GM13977 (cell line): ENCODE measurements at regions of chr12 and their contacts with region 1.

Region 1: GRCh38 chr12:59149997-59150642 is 229.8 kb upstream of the LRIG3 start:
- DNase-seq: peak; percentile 31
- CTCF ChIP-seq: peak; percentile 98

Region 2: DNA sequence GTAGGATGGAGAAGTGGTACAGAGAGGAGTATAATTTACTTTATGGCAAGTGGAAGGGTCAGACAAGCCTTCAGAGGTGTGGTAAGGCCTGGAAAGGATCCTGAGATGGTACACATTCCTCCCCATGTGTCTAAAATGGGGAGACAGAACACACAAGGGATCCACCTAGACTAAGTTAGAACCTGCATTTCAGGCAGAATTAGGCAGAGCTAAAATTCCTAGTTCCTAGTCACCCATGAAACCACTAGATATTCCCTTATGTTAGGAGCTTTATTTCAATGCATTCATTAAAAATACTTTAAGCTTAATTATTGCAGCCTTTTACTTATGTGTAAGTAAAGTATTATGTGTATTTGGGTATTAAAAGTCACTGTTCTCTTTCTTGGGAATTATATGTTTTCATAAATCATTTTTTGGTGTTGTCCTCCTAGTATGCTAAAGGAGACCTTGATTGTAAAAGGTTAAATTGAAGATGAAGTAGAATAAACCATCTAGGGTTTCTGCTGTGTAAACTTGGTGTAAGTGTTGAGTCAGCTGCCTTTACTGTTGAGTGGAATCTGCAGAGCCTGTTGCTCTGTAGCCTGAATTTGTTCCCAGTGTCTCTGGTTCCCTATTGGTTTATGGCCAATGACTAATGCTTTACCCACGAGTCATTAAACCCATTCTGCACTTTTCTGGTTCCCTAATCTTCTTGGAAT is 785.6 kb before region 1 on chr12:
- in situ Hi-C with region 1: loop called (anchors 25 kb)
- DNase-seq: no peak
- CTCF ChIP-seq: no peak

Region 3: GRCh38 chr12:58540480-58541299 is 609.4 kb before region 1 on chr12:
- in situ Hi-C with region 1: loop called (anchors 25 kb)
- DNase-seq: no peak
- CTCF ChIP-seq: peak; percentile 66

Region 4: GRCh38 chr12:58950739-58951100 is 199.4 kb before region 1 on chr12:
- in situ Hi-C with region 1: no loop called
- DNase-seq: no peak
- CTCF ChIP-seq: no peak

Region 5: GRCh38 chr12:59067083-59067482 is 83.0 kb before region 1 on chr12:
- in situ Hi-C with region 1: no loop called
- DNase-seq: peak; percentile 23
- CTCF ChIP-seq: no peak

Region 6: DNA sequence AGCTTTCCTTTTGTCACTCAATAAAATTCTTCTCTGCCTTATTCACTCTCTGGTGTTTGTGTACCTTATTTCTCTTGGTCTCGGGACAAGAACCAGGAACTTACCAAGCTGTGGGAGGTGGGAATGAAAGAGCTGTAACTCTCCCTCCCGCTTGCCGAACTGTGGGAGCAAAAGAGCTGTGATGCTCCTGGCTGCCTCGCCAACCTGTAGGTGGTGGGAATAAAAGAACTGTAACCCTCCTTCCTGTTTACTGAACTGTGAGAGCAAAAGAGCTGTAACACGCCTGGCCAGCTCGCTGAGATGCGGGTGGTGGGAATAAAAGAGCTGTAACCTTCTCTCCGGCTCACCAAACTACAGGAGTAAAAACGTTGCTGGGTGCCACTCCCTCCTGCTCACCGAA is 84.3 kb after region 1 on chr12:
- in situ Hi-C with region 1: no loop called
- DNase-seq: no peak
- CTCF ChIP-seq: no peak

Region 7: DNA sequence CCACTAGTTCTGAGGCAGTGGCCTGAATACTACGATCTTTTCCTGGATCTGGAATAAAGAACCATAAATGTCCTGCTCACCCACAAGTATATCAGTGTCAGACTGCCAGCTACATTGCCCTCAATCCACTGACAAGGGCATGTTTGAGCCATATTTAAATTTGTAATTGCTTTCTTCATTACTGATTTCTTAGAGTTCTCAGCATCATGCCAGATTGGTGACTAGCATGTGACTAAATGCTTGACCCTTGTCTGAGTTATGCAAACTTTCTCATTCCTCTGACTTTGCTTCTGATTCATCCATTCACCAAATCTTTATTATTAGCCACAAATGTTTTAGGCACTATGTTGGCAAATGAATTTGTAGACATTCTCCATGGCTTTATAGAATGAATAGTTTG is 302.1 kb after region 1 on chr12:
- in situ Hi-C with region 1: no loop called
- DNase-seq: no peak
- CTCF ChIP-seq: no peak